Right lobe of liver (tissue), 6 donors: ENCODE measurements at regions of chr21 and their contacts with region 1.

Region 1: GRCh38 chr21:45140346-45140940 is 66.1 kb downstream of the ADARB1 start:
- DNase-seq: peak; percentile 76 to 81 (median 81)
- ATAC-seq: peak; percentile 93 to 95 (median 94)
- H3K4me3 ChIP-seq: no peak overlapping the region
- H3K27ac ChIP-seq: no peak overlapping the region
- H3K4me1 ChIP-seq: peaks cover 0 to 4% (median 0%) of the 10 kb centered on the region in 4 donors
- H3K27me3 ChIP-seq: no peaks in the 10 kb centered on the region
- CTCF ChIP-seq: peak; percentile 79 to 90 (median 84)
- POLR2A ChIP-seq: no peak

Region 2: DNA sequence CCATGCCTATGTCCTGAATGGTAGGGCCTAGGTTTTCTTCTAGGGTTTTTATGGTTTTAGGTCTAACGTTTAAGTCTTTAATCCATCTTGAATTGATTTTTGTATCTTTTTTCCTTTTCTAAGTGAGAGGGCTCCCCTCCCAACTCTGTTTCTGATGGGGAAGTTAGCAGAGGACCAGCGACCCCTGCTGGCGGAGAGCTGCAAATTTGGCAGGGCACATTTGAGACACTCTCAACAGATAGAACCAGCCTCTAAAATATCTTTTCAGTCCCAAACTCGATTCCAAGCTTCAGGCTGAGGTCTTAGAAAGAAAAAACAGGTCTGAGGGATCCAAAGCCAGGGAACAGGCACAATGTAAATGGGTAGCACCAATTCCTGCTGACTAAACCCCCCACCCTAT is 652.6 kb before region 1 on chr21:
- intact Hi-C with region 1: no loop called
- DNase-seq: peak in 1 of 3 donors; percentile 49
- ATAC-seq: no peak
- H3K4me3 ChIP-seq: no peak overlapping the region
- H3K27ac ChIP-seq: no peak overlapping the region
- H3K4me1 ChIP-seq: no peaks in the 10 kb centered on the region
- H3K27me3 ChIP-seq: no peaks in the 10 kb centered on the region
- CTCF ChIP-seq: peak; percentile 21 to 62 (median 50)
- POLR2A ChIP-seq: no peak

Region 3: DNA sequence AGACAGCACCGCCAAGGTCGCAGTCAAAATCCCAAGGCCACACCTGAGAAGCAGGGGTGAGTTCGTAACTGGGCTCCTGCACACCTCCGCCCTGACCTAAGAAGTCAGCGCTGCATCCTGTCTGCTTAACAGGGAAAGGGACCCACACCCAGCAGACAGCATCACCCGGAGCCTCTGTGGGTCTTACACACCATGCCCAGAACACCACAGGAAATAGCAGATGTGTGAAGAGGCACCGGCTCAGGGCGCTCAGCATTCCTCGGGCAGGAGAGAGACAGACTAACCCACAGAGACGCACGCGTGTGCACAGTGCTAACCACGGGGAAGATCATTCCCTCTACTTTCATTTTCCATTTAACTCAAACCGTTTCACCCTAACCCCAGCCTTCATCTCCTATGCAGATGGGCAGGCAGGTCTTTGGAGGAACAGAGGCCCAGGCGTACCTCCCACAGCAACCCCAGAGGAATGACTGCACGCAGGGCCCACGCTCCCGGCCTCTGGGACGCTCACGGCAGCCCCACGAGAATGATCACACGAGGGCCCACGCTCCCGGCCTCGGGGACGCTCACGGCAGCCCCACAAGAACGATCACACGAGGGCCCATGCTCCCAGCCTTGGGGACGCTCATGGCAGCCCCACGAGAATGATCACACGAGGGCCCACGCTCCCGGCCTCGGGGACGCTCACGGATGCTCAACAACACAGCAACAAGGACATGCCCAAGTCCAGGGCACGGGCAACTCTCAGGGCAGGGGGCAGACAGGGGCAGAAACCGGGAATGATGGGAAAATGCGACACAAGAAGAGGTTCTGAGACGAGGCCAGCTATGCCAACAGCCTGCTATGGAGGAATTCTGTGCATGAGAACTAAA is 126.3 kb after region 1 on chr21:
- intact Hi-C with region 1: loop called in 1 of 2 experiments (anchors 10 kb)
- DNase-seq: peak in 2 of 3 donors; percentile 35 to 44
- ATAC-seq: peak in 2 of 4 donors; percentile 8 to 9
- H3K4me3 ChIP-seq: no peak overlapping the region
- H3K27ac ChIP-seq: no peak overlapping the region
- H3K4me1 ChIP-seq: peaks cover 0 to 11% (median 0%) of the 10 kb centered on the region in 4 donors
- H3K27me3 ChIP-seq: no peaks in the 10 kb centered on the region
- CTCF ChIP-seq: no peak
- POLR2A ChIP-seq: no peak

Region 4: GRCh38 chr21:45427331-45428271 is 287.2 kb after region 1 on chr21:
- intact Hi-C with region 1: loop called (anchors 10 kb)
- DNase-seq: no peak
- ATAC-seq: peak in 3 of 4 donors; percentile 6 to 74 (median 42)
- H3K4me3 ChIP-seq: no peak overlapping the region
- H3K27ac ChIP-seq: no peak overlapping the region
- H3K4me1 ChIP-seq: no peaks in the 10 kb centered on the region
- H3K27me3 ChIP-seq: no peaks in the 10 kb centered on the region
- CTCF ChIP-seq: no peak
- POLR2A ChIP-seq: no peak

Region 5: DNA sequence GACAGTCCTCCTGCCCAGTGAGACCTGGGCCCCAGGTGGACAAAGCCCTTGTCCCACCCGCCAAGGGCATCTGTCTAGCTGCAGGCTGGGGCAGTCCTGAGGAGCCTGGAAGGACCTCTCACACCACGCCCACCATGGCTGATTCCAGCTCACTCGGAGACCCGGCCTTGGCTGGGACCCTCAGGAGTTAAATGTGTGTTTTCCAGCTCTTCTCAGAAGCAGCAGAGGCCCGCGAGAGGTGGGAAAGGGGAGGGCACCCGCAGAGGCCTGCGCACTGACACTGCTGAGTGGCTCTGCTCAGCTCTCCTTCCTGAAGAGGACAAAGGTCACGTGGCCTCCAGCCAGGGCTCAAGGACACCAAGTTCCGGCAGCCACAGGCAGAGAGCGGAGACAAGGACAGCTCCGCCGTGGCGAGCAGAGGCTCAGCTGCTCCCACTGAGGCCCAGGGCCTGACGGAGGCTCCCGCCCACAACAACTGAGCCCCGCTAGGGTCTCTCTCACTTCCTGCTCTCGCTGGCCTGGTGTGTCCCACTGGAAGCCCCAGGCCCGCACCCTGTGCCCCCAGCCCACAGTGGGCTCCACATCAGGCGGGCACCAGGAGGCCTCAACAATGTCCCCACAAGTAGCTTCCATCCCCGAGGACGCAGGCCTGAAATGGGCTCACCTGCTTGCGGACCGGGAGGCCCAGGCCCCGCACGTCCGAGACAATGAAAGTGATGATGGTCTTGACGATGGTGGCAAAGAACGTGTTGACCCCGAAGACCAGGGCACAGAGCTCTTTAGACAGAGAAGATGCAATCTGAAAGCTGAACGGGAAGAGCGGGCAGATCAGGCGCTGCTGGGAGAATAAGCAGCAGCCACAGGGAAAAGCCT is 384.9 kb after region 1 on chr21:
- intact Hi-C with region 1: no loop called
- DNase-seq: peak; percentile 93 to 97 (median 95)
- ATAC-seq: peak; percentile 89 to 93 (median 92)
- H3K4me3 ChIP-seq: peak overlapping the region in 2 of 3 donors; percentile 25 to 27
- H3K27ac ChIP-seq: peak overlapping the region; percentile 23 to 83 (median 80)
- H3K4me1 ChIP-seq: peaks cover 0 to 31% (median 13%) of the 10 kb centered on the region in 4 donors
- H3K27me3 ChIP-seq: no peaks in the 10 kb centered on the region
- CTCF ChIP-seq: no peak
- POLR2A ChIP-seq: peak; percentile 83